ENCODE measurements at regions of chrX and their contacts with region 1.

Region 1: GRCh38 chrX:9312922-9313867 is 151.7 kb upstream of the TBL1X start:
- DNase-seq: peak; percentile 33 to 79 (median 62)
- ATAC-seq: peak; percentile 45 to 81 (median 65)
- H3K4me3 ChIP-seq: peak overlapping the region in 1 of 2 donors; percentile 5
- H3K4me3 Mint-ChIP-seq: peak overlapping the region in 1 of 3 donors; percentile 45
- H3K27ac ChIP-seq: no peak overlapping the region
- H3K27ac Mint-ChIP-seq: peak overlapping the region in 1 of 2 donors; percentile 31
- H3K4me1 ChIP-seq: peaks cover 0 to 15% of the 10 kb centered on the region in 2 experiments
- H3K4me1 Mint-ChIP-seq: peaks cover 12 to 17% (median 17%) of the 10 kb centered on the region in 3 donors
- H3K27me3 ChIP-seq: no peaks in the 10 kb centered on the region
- H3K27me3 Mint-ChIP-seq: no peaks in the 10 kb centered on the region

Region 2: DNA sequence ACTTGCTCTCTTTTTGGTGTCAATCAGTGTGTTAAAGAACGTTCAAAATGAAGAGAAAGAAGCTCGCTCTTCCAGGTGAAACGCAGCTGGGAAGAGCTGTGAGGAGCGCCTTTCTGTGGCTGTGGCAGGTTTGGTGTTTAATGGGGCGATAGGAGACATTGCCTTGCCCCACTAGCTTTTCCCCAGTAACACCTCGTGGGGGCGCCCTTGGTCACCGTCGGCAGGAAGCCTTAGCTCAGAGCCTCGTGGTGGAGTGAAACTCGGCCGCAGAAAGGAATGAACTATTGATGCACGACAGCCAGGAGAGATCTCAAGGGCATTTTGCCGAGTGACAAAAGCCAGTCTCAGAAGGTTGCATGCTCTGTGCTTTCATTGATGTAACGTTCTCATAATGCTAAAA is 387.4 kb after region 1 on chrX:
- CTCF ChIA-PET with region 1: interaction called in 1 of 2 experiments, 12 read pairs
- POLR2A ChIA-PET with region 1: no interaction called
- DNase-seq: no peak
- ATAC-seq: no peak
- H3K4me3 ChIP-seq: no peak overlapping the region
- H3K4me3 Mint-ChIP-seq: no peak overlapping the region
- H3K27ac ChIP-seq: no peak overlapping the region
- H3K27ac Mint-ChIP-seq: no peak overlapping the region
- H3K4me1 ChIP-seq: no peaks in the 10 kb centered on the region
- H3K4me1 Mint-ChIP-seq: no peaks in the 10 kb centered on the region
- H3K27me3 ChIP-seq: no peaks in the 10 kb centered on the region
- H3K27me3 Mint-ChIP-seq: no peaks in the 10 kb centered on the region

Measured in T-cell (primary cell).